ENCODE measurements at regions of chr2 and their contacts with region 1.

Region 1: DNA sequence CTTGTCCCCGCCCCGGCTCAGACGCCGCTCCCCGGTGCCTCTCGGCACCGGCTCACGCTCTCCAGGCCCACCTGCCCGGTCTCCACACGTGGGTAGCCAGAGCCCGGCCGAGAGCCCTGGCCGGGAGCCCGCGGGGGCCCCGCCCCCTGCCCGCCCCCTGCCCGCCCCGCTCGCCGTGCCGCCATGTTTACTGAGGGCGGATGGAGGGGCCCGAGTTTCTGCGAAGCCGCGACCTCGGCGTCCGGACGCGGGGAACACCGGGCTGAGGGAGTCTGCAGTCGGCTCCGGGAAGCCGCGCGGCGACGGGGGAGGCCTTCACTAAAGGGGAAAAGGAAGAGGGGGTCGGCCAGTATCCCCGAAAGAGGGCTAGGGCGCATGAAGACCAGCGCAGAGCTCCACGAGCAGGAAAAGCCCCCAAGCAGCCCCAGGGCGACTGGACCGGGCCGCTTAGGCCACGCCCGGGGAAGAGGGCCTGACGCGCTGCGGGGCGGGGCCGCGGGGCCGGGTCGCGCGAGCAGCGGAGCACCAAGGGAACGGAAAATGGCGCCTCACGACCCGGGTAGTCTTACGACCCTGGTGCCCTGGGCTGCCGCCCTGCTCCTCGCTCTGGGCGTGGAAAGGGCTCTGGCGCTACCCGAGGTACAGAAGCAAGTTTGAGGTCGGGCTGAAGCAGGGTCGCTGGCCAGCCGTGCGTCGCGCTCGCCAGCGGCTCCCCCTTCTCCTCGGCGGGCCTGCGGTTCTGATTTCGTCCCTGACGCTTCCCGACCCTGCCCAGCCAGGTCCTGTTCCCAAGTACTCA is at the starts of genes ATRAID and SLC5A6:
- DNase-seq: peak; percentile 96
- ATAC-seq: peak; percentile 88
- H3K4me3 Mint-ChIP-seq: peak within 1 kb of the TSS; percentile 97
- H3K27ac Mint-ChIP-seq: peak within 1 kb of the TSS; percentile 100
- H3K4me1 Mint-ChIP-seq: peaks cover 33% of the 10 kb centered on the region
- H3K27me3 Mint-ChIP-seq: no peaks in the 10 kb centered on the region
- CTCF ChIP-seq: no peak
- total RNA-seq, gene ATRAID: 73.9 and 77.2 TPM in 2 replicates
- total RNA-seq, gene SLC5A6: 53.2 and 69.9 TPM in 2 replicates

Region 2: GRCh38 chr2:27032495-27033252 is 179.4 kb before region 1 on chr2 and contains the start of gene TMEM214:
- CTCF ChIA-PET with region 1: no interaction called
- POLR2A ChIA-PET with region 1: interaction called, 4 read pairs
- intact Hi-C with region 1: loop called (anchors 1 kb)
- DNase-seq: peak; percentile 76
- ATAC-seq: peak; percentile 95
- H3K4me3 Mint-ChIP-seq: peak within 1 kb of the TSS; percentile 93
- H3K27ac Mint-ChIP-seq: peak within 1 kb of the TSS; percentile 80
- H3K4me1 Mint-ChIP-seq: peaks cover 32% of the 10 kb centered on the region
- H3K27me3 Mint-ChIP-seq: no peaks in the 10 kb centered on the region
- CTCF ChIP-seq: no peak
- total RNA-seq, gene TMEM214: 84.4 and 92.1 TPM in 2 replicates

Region 3: GRCh38 chr2:27050281-27050995 is 161.6 kb before region 1 on chr2:
- CTCF ChIA-PET with region 1: no interaction called
- POLR2A ChIA-PET with region 1: interaction called, 12 read pairs
- intact Hi-C with region 1: loop called (anchors 1 kb)
- DNase-seq: peak; percentile 91
- ATAC-seq: peak; percentile 60
- H3K4me3 Mint-ChIP-seq: peak overlapping the region; percentile 97
- H3K27ac Mint-ChIP-seq: peak overlapping the region; percentile 100
- H3K4me1 Mint-ChIP-seq: peaks cover 19% of the 10 kb centered on the region
- H3K27me3 Mint-ChIP-seq: peaks cover 6% of the 10 kb centered on the region
- CTCF ChIP-seq: no peak

Region 4: GRCh38 chr2:27133905-27134780 is 77.9 kb before region 1 on chr2 and contains the start of gene PREB:
- CTCF ChIA-PET with region 1: no interaction called
- POLR2A ChIA-PET with region 1: interaction called, 12 read pairs
- intact Hi-C with region 1: loop called (anchors 1 kb)
- DNase-seq: peak; percentile 99
- ATAC-seq: peak; percentile 99
- H3K4me3 Mint-ChIP-seq: peak within 1 kb of the TSS; percentile 95
- H3K27ac Mint-ChIP-seq: peak within 1 kb of the TSS; percentile 90
- H3K4me1 Mint-ChIP-seq: peaks cover 20% of the 10 kb centered on the region
- H3K27me3 Mint-ChIP-seq: no peaks in the 10 kb centered on the region
- CTCF ChIP-seq: no peak
- total RNA-seq, gene PREB: 38.6 and 38.7 TPM in 2 replicates

Region 5: DNA sequence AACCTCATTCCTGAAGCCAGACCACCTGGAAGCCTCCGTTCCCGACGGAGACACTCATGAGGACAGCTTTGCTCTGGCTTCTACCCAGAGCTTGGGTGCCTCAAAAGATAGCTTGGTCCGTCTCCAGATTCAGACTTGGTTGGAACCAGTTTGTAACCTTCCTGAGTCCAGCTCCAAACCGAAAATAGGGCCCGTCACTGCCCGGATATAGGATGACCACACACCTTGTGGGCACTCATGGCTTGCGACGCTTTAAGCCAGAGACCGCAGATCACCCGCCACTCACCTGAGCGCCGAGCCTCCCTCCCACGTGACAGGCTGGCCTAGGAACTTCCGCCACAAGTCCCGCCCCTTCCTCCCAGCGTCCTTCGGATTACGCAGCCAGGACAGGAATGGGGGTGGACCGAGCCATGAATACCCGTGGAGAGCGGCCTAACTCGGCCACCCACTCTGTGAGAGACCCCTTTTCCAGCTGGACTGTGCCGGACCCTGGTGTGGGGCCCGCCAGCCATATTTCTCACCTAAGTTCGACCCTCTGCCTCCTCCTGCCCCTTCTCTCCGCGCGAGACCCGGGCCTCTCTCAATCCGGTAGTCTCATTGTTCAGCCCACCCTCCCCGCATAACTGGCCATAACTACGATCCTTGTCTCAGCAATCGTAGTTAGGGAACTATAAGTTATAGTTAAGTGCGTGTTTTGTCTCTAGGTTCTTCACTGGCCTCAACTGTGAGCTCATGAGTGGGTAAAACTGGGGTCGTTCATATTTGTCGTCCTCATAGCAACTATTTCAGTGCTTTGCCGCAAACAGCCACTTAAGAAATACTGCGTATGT is 111.0 kb after region 1 on chr2 and contains the start of gene MPV17:
- CTCF ChIA-PET with region 1: no interaction called
- POLR2A ChIA-PET with region 1: interaction called, 3 read pairs
- intact Hi-C with region 1: loop called (anchors 1 kb)
- DNase-seq: peak; percentile 79
- ATAC-seq: peak; percentile 95
- H3K4me3 Mint-ChIP-seq: peak within 1 kb of the TSS; percentile 99
- H3K27ac Mint-ChIP-seq: peak within 1 kb of the TSS; percentile 96
- H3K4me1 Mint-ChIP-seq: peaks cover 25% of the 10 kb centered on the region
- H3K27me3 Mint-ChIP-seq: no peaks in the 10 kb centered on the region
- CTCF ChIP-seq: no peak
- total RNA-seq, gene MPV17: 78.1 and 98.3 TPM in 2 replicates

Region 6: DNA sequence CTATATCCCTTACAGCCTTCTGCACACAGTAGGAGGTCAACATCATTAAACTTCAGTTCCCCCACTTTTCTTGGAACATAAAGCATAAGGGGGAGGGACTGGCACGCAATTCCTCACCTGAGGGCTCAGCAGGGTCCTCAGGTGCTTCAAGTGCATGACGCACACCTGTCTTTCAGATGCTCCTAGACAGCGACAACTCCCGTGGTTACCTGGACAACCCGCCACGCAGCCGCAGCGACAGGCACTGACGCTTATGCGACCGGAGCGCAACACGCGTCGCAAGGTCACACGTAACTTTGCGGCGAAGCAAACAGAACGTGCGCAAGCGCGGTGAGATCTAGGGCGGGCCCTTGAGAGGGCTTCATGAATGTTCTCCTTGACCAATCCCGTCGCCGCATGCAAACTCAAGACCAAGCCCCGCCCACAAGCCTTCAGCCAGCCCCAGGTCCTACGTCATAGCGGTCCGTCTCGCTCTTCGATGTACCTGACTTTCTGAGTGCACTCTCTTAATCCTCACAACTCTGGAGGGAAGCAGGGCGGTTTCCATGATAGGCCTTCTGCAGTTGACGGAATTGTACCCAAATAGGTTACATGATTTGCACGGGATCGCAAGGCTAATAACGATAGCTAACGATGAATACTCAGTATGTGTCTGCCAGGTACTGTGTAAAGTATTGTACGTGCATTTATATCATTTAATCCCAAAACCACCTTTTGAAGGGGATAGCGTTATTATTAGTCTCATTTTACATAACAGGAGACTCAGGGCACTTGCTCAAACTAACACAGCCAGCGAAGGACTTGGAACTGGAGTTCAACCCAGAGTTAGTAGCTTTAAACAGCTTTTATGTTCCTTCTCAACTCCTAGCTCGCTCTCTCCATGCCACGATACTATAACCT is 277.7 kb after region 1 on chr2 and contains the start of gene IFT172:
- CTCF ChIA-PET with region 1: no interaction called
- POLR2A ChIA-PET with region 1: no interaction called
- intact Hi-C with region 1: loop called (anchors 5 kb)
- DNase-seq: peak; percentile 92
- ATAC-seq: peak; percentile 96
- H3K4me3 Mint-ChIP-seq: peak within 1 kb of the TSS; percentile 86
- H3K27ac Mint-ChIP-seq: peak within 1 kb of the TSS; percentile 79
- H3K4me1 Mint-ChIP-seq: peaks cover 26% of the 10 kb centered on the region
- H3K27me3 Mint-ChIP-seq: peaks cover 19% of the 10 kb centered on the region
- CTCF ChIP-seq: no peak
- total RNA-seq, gene IFT172: 12.7 and 14.4 TPM in 2 replicates

Region 7: DNA sequence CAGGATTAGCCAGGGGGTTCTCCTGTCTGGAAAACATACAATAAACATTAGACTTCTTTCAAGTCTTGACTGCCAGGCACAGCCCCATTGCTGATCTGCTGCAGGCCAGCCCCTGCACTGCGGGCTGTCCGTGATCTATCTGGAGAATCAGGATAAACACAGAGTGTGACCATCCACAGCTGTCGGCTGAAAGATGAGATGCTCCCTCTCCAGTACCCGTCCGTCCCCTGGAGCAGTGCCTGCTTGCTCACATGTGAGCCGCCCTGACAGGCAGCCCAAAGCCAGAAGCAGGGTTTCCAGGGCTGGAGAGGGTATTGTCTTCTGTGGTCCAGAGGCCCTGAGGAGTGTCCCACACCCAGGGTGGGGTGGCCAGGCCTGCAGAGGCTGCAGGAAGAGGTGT is 1134.6 kb after region 1 on chr2:
- CTCF ChIA-PET with region 1: no interaction called
- POLR2A ChIA-PET with region 1: no interaction called
- intact Hi-C with region 1: no loop called
- DNase-seq: no peak
- ATAC-seq: no peak
- H3K4me3 Mint-ChIP-seq: no peak overlapping the region
- H3K27ac Mint-ChIP-seq: no peak overlapping the region
- H3K4me1 Mint-ChIP-seq: no peaks in the 10 kb centered on the region
- H3K27me3 Mint-ChIP-seq: no peaks in the 10 kb centered on the region
- CTCF ChIP-seq: no peak

Region 8: DNA sequence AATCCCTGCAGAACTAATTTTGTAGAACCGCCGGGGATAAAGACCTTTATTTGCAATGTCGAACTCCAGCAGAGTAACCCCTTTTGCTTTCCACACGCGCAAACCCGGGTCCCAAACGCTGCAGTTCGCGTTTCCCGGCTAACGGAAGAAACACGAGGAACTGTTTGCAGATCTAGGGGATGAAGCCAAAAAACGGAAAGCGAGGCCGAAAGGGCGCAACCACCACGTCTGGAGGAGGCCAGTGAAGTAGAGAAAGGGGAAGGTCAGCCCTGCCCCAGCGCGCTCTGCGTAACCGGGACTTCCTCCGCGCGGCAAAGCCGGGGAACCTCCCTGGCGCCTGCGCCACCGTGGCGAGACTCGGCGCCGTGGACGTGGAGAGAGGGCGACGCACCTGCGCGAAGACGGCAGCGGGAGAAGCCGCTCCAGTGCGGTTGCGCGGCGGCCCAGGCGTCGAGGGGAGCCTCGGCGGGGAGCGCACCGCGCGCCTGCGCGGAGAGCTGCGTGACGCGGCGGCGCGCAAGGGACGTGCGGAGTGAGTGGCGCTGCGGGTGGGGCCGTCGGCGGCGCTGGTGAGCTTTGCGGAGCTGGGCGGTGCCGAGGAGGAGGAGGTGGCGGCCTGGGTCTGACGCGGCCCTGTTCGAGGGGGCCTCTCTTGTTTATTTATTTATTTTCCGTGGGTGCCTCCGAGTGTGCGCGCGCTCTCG is 1539.4 kb after region 1 on chr2 and contains the start of gene PPP1CB:
- CTCF ChIA-PET with region 1: no interaction called
- POLR2A ChIA-PET with region 1: no interaction called
- intact Hi-C with region 1: loop called (anchors 5 kb)
- DNase-seq: peak; percentile 96
- ATAC-seq: peak; percentile 86
- H3K4me3 Mint-ChIP-seq: peak within 1 kb of the TSS; percentile 95
- H3K27ac Mint-ChIP-seq: peak within 1 kb of the TSS; percentile 98
- H3K4me1 Mint-ChIP-seq: peaks cover 54% of the 10 kb centered on the region
- H3K27me3 Mint-ChIP-seq: no peaks in the 10 kb centered on the region
- CTCF ChIP-seq: no peak
- total RNA-seq, gene PPP1CB: 130 and 135 TPM in 2 replicates

Measured in activated B cell treated with CpG ODN at 0.5 μM for 24 hours (primary cell).